ENCODE measurements at regions of chr1 and their contacts with region 1.

Region 1: DNA sequence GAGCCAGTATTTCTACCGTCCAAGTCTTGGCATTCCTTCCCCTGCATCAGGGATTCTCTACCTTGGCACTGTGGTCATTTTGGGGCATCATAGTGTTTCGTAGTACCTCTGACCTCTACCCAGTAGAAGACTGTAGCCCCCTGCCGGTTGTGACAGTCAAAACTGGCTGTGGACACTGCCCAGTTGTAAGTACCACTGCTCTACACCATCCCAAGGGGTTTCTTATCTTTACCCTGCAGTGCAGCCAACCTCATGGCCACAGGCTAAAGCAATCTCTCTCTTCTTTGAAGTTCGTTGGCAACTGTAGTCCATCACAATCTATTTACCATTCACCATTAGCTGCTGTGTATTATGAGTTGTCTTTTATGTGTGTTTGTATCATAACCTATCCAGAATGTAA is 29.3 kb upstream of the ERO1B start:
- DNase-seq: no peak

Region 2: GRCh38 chr1:236120721-236121153 is 190.3 kb before region 1 on chr1:
- intact Hi-C with region 1: loop called in 1 of 2 experiments (anchors 10 kb)
- DNase-seq: no peak

Region 3: GRCh38 chr1:236269439-236269838 is 41.6 kb before region 1 on chr1:
- intact Hi-C with region 1: no loop called
- DNase-seq: no peak

Region 4: DNA sequence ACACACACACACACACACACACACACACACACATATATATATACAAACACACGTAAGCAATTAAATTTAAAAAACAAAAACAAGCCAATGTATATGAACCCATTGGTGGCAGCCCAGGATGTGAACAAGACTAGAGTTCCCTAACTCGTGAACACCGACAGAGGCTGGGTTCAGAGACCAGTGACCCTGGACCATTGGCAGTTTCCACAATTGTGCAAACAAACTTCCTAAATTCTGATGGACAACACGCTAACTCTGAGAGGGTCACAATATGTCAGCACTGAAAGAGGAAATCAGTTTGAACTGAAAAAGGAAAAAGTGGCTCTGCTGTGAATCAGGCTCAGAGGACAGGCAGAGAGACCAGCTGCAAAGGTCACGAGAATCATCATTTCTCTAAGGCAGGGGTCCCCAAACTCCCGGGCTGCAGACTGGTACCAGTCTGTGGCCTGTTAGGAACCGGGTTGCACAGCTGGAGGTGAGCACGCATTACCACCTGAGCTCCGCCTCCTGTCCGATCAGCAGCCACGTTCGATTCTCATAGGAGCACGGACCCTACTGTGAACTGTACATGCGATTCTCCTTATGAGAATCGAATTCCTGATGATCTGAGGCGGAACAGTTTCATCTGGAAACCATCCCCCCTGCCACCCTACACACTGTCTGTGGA is 21.2 kb after region 1 on chr1:
- intact Hi-C with region 1: loop called in 1 of 2 experiments (anchors 1 kb)
- DNase-seq: no peak

Region 5: DNA sequence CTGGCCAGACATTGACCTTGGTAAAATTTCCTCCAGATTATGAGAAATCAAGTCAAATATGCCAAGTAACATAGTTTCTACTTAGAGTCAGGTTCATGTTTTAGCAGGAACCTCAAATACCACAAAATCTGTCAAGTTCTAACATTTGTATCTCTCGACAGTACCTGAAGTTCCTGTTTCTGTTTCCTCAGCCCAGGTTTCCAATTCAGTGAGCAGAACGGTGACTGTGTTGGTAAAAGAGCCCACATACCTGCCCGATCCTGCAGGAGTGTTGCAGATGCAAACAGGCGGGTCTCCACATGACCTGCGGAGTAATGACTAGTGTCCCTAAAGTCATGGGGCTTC is 154.9 kb after region 1 on chr1:
- intact Hi-C with region 1: no loop called
- DNase-seq: no peak